GM12878 (cell line): ENCODE measurements at regions of chrX and their contacts with region 1.

Region 1: DNA sequence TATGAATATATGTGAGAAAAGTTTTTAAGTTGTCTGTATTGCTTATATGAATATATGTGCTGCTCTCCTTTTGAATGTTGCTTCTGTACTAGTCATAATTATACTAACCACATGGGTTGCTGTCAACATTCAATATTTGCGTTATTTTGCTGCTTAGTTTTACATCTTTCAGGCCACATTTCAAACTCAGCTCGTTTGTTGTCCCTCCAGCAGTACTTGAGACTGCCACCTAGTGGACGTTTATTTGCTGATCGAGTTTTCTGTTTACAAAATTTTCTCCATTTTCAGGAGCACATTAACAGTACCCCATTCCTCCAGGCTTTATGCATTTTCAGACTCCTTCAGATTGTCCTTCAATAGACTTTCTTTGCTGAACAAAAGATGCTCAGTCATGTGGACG is 75.8 kb downstream of the NUDT11 start:
- DNase-seq: no peak
- ATAC-seq: peak; percentile 58
- H3K4me3 ChIP-seq: no peak overlapping the region
- H3K27ac ChIP-seq: no peak overlapping the region
- H3K4me1 ChIP-seq: no peaks in the 10 kb centered on the region
- H3K27me3 ChIP-seq: no peaks in the 10 kb centered on the region
- CTCF ChIP-seq: peak; percentile 60 to 74 (median 62); a peak in 5 of 6 replicates
- EP300 ChIP-seq: no peak
- POLR2A ChIP-seq: no peak
- RAD21 ChIP-seq: peak; percentile 53

Region 2: DNA sequence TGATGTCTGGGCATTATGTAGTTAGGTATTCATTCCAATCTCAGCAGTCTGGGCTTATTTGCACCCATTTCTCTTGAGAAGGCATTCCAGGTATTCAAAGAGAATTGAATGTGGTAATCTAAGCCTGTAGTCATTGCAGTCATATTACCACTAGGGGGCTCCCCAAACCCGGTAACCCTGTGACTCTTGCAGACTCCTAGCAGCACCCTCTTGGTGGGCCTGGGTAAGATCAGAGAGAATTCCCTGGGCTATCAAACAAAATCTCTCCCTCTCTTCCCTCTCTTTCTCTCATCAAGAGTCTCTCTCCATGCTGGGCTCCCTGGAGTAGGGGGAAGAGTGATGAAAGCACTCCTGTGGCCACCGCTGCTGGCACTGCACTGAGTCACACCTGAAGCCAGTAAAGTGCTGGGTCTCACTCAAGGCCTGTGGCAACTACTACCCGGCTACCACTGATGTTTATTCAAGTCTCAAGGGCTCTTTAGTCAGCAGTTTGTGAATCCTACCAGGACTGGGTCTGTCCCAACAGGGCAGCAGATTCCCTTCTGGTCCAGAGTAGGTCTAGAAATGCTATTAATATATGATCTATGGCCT is 275.7 kb before region 1 on chrX:
- CTCF ChIA-PET with region 1: interaction called, 14 read pairs
- POLR2A ChIA-PET with region 1: no interaction called
- RAD21 ChIA-PET with region 1: interaction called, 3 read pairs
- SMC1A ChIA-PET with region 1: interaction called, 4 read pairs
- in situ Hi-C with region 1: no loop called
- intact Hi-C with region 1: loop called (anchors 2 kb)
- DNase-seq: peak; percentile 1
- ATAC-seq: peak; percentile 92
- H3K4me3 ChIP-seq: no peak overlapping the region
- H3K27ac ChIP-seq: no peak overlapping the region
- H3K4me1 ChIP-seq: no peaks in the 10 kb centered on the region
- H3K27me3 ChIP-seq: no peaks in the 10 kb centered on the region
- CTCF ChIP-seq: peak; percentile 65 to 80 (median 78)
- EP300 ChIP-seq: no peak
- POLR2A ChIP-seq: no peak
- RAD21 ChIP-seq: peak; percentile 65

Region 3: DNA sequence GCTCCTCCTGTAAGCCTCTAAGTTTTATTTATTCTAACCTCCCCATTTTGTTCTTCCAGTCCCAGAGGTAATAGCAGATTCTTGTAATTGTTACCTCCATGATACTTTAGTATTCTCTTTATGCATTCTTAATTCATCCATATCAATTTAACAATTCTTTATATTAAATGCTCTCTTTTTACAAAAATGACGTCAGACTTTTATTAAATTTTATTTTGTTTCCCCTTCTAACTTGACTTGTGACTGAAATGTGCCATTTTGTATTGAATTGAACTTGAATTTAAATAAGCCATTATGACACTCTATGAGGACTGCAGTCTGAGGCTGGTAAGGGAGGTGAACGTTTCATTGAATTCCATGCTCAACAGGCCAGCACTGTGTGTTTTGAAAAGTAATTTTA is 148.0 kb before region 1 on chrX:
- CTCF ChIA-PET with region 1: no interaction called
- POLR2A ChIA-PET with region 1: no interaction called
- RAD21 ChIA-PET with region 1: no interaction called
- SMC1A ChIA-PET with region 1: no interaction called
- in situ Hi-C with region 1: no loop called
- intact Hi-C with region 1: no loop called
- DNase-seq: no peak
- ATAC-seq: no peak
- H3K4me3 ChIP-seq: no peak overlapping the region
- H3K27ac ChIP-seq: no peak overlapping the region
- H3K4me1 ChIP-seq: no peaks in the 10 kb centered on the region
- H3K27me3 ChIP-seq: no peaks in the 10 kb centered on the region
- CTCF ChIP-seq: no peak
- EP300 ChIP-seq: no peak
- POLR2A ChIP-seq: no peak
- RAD21 ChIP-seq: no peak

Region 4: DNA sequence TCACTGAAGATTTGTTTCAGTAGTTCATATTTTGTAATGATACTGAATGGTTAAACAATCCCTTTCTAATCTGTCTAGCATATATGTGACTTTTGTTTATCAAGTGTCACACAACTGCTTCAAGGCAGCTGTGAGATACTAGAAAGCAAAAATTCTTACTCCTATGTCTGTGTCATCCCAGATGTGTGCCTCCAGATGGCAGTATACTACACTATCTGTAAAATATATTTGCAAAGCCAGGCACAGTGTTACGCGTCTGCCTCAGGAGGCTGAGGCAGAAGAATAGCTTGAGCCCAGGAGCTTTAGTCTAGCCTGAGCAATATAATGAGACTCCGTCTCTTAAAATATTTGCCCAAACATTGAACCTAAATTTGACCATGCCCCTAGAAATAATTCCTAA is 84.0 kb before region 1 on chrX:
- CTCF ChIA-PET with region 1: interaction called, 30 read pairs
- POLR2A ChIA-PET with region 1: no interaction called
- RAD21 ChIA-PET with region 1: interaction called, 10 read pairs
- SMC1A ChIA-PET with region 1: interaction called, 10 read pairs
- in situ Hi-C with region 1: no loop called
- intact Hi-C with region 1: loop called (anchors 5 kb)
- DNase-seq: no peak
- ATAC-seq: peak; percentile 74
- H3K4me3 ChIP-seq: no peak overlapping the region
- H3K27ac ChIP-seq: no peak overlapping the region
- H3K4me1 ChIP-seq: no peaks in the 10 kb centered on the region
- H3K27me3 ChIP-seq: no peaks in the 10 kb centered on the region
- CTCF ChIP-seq: peak; percentile 32 to 50 (median 46); a peak in 4 of 6 replicates
- EP300 ChIP-seq: no peak
- POLR2A ChIP-seq: no peak
- RAD21 ChIP-seq: peak; percentile 57

Region 5: DNA sequence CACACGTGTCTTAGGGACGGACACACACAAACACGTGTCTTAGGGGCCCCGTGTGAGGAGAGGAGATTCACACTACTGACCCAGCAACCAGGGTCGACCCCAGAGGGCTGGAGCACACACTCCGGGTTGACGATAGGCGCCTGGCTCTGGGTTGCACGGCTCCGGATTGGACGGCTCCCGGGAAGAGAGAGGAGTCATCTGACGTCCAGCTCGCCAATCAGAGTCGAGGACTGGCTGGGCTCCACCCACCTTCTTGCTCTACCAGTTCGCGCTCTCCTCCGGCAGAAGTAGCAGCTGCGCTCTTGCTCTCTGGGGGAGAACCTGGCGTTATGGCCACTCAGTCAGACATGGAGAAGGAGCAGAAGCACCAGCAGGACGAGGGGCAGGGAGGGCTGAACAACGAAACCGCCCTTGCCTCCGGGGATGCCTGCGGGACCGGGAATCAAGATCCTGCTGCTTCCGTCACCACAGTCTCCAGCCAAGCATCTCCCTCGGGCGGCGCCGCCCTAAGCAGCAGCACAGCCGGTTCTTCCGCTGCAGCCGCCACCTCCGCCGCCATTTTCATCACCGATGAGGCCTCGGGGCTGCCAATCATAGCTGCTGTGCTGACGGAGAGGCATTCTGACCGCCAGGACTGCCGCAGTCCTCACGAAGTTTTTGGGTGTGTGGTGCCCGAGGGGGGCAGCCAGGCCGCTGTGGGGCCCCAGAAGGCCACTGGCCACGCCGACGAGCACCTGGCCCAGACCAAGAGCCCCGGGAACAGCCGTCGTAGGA is 13.7 kb before region 1 on chrX:
- CTCF ChIA-PET with region 1: interaction called, 25 read pairs
- POLR2A ChIA-PET with region 1: no interaction called
- RAD21 ChIA-PET with region 1: no interaction called
- SMC1A ChIA-PET with region 1: interaction called, 3 read pairs
- in situ Hi-C with region 1: no loop called
- intact Hi-C with region 1: no loop called
- DNase-seq: no peak
- ATAC-seq: no peak
- H3K4me3 ChIP-seq: no peak overlapping the region
- H3K27ac ChIP-seq: no peak overlapping the region
- H3K4me1 ChIP-seq: no peaks in the 10 kb centered on the region
- H3K27me3 ChIP-seq: no peaks in the 10 kb centered on the region
- CTCF ChIP-seq: no peak
- EP300 ChIP-seq: no peak
- POLR2A ChIP-seq: no peak
- RAD21 ChIP-seq: no peak

Region 6: DNA sequence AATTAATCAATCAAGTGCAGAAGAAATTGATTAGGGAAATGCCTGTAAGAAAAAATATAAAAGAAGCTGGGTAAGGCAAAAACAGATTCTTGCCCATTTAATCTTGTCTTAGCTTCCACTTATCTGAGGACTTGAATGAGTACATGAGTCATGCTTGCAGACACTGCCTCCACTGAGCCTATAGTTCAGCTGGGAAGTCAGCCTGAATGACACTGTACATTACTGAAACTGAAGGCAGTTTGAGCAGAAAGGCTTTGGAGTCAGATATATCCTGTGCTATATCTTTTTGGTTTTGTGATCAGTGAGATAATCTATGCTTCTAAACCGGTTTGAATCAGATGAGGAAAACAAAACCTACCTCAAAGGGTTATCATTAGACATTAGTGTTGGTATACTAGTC is 14.5 kb after region 1 on chrX:
- CTCF ChIA-PET with region 1: interaction called, 11 read pairs
- POLR2A ChIA-PET with region 1: no interaction called
- RAD21 ChIA-PET with region 1: no interaction called
- SMC1A ChIA-PET with region 1: interaction called, 3 read pairs
- in situ Hi-C with region 1: no loop called
- intact Hi-C with region 1: no loop called
- DNase-seq: no peak
- ATAC-seq: no peak
- H3K4me3 ChIP-seq: no peak overlapping the region
- H3K27ac ChIP-seq: no peak overlapping the region
- H3K4me1 ChIP-seq: no peaks in the 10 kb centered on the region
- H3K27me3 ChIP-seq: no peaks in the 10 kb centered on the region
- CTCF ChIP-seq: no peak
- EP300 ChIP-seq: no peak
- POLR2A ChIP-seq: no peak
- RAD21 ChIP-seq: no peak